Motor neuron (in vitro differentiated cells): ENCODE measurements at regions of chr7 and their contacts with region 1.

Region 1: GRCh38 chr7:100799014-100799896 is 28.1 kb downstream of the EPHB4 start:
- ATAC-seq: peak in 4 of 8 experiments; percentile 5 to 32 (median 18)
- H3K4me3 ChIP-seq: no peak overlapping the region
- H3K27ac ChIP-seq: no peak overlapping the region
- H3K4me1 ChIP-seq: peaks cover 4 to 12% of the 10 kb centered on the region in 2 donors

Region 2: GRCh38 chr7:100852048-100852872 is 53.0 kb after region 1 on chr7 and contains the start of gene SLC12A9:
- in situ Hi-C with region 1: loop called in 1 of 9 experiments (anchors 10 kb)
- ATAC-seq: peak; percentile 99
- H3K4me3 ChIP-seq: peak within 1 kb of the TSS; percentile 50 to 78 (median 77)
- H3K27ac ChIP-seq: no peak within 1 kb of the TSS
- H3K4me1 ChIP-seq: peaks cover 4 to 6% of the 10 kb centered on the region in 2 donors
- total RNA-seq, gene SLC12A9: 6.8 to 29.3 (median 11.9) TPM